ENCODE measurements at regions of chr12 and their contacts with region 1.

Region 1: GRCh38 chr12:63668028-63668799 is at the start of gene DPY19L2:
- DNase-seq: peak; percentile 73 to 92
- H3K4me3 ChIP-seq: peak within 1 kb of the TSS; percentile 74 to 88
- H3K27ac ChIP-seq: peak within 1 kb of the TSS; percentile 92 to 98
- H3K4me1 ChIP-seq: peaks cover 0 to 15% (median 0%) of the 10 kb centered on the region in 4 donors
- H3K27me3 ChIP-seq: no peaks in the 10 kb centered on the region
- CTCF ChIP-seq: no peak

Region 2: DNA sequence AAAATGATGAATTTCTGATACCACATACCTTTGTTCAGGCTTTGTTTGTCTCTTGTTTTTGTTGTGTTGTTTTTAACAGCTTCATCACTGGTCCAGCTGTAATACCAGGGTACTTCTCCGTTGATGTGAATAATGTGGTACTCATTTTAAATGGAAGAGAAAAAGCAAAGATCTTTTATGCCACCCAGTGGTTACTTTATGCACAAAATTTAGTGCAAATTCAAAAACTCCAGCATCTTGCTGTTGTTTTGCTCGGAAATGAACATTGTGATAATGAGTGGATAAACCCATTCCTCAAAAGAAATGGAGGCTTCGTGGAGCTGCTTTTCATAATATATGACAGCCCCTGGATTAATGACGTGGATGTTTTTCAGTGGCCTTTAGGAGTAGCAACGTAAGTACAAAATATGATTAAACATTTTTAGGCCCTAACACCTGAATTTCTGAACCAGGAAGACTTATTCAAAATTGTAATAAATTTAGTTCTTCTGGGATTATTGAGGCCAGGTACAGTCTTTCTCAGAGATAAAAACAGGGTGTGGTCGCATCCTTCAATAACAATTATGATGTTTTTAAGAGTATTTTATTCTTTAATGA is 133.9 kb after region 1 on chr12:
- intact Hi-C with region 1: loop called (anchors 10 kb)
- DNase-seq: no peak
- H3K4me3 ChIP-seq: no peak overlapping the region
- H3K27ac ChIP-seq: no peak overlapping the region
- H3K4me1 ChIP-seq: no peaks in the 10 kb centered on the region
- H3K27me3 ChIP-seq: no peaks in the 10 kb centered on the region
- CTCF ChIP-seq: peak; percentile 67 to 70

Region 3: GRCh38 chr12:63897931-63898330 is 229.7 kb after region 1 on chr12:
- intact Hi-C with region 1: no loop called
- DNase-seq: no peak
- H3K4me3 ChIP-seq: no peak overlapping the region
- H3K27ac ChIP-seq: no peak overlapping the region
- H3K4me1 ChIP-seq: peaks cover 0 to 5% (median 1%) of the 10 kb centered on the region in 4 donors
- H3K27me3 ChIP-seq: no peaks in the 10 kb centered on the region
- CTCF ChIP-seq: no peak

Measured in tibial artery (tissue), 4 donors.